IMR-90 (cell line): ENCODE measurements at regions of chr9 and their contacts with region 1.

Region 1: GRCh38 chr9:116937361-116937760 is 250.3 kb downstream of the TRIM32 start:
- DNase-seq: peak; percentile 71
- ATAC-seq: peak; percentile 53; the same call in 1 of the 2 replicates
- H3K4me3 ChIP-seq: no peak overlapping the region
- H3K27ac ChIP-seq: no peak overlapping the region
- H3K4me1 ChIP-seq: peaks cover 2% of the 10 kb centered on the region; the same call in 1 of the 2 replicates
- H3K27me3 ChIP-seq: peaks cover 1% of the 10 kb centered on the region; the same call in 1 of the 2 replicates
- CTCF ChIP-seq: no peak
- POLR2A ChIP-seq: no peak
- RAD21 ChIP-seq: no peak

Region 2: DNA sequence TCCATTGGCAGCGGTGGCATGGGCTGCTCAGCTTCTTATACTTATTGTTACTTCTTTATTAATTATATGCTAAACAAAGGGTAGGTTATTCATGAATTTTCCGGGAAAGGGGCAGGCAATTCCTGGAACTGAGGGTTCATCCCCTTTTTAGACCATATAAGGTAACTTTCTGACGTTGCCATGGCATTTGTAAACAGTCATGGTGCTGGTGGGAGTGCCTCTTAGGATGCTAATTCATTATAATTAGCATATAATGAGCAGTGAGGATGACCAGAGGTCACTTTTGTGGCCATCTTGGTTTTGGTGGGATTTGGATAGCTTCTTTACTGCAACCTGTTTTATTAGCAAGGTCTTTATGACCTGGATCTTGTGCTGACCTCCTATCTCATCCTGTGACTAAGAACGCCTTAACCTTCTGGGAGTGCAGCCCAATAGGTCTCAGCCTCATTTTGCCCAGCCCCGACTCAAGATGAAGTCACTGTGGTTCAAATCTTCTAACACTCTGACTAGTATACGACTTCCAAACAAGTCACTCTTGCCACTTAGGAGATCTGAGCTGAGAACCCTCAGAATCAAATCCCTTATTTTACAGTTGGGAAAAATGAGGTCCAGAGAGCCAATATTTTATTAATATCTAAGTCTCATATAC is 12.8 kb before region 1 on chr9:
- CTCF ChIA-PET with region 1: no interaction called
- POLR2A ChIA-PET with region 1: interaction called, 3 read pairs
- dilution Hi-C with region 1: no loop called
- in situ Hi-C with region 1: no loop called
- intact Hi-C with region 1: loop called (anchors 1 kb)
- DNase-seq: no peak
- ATAC-seq: no peak
- H3K4me3 ChIP-seq: no peak overlapping the region
- H3K27ac ChIP-seq: no peak overlapping the region
- H3K4me1 ChIP-seq: no peaks in the 10 kb centered on the region
- H3K27me3 ChIP-seq: peaks cover 2% of the 10 kb centered on the region; the same call in 1 of the 2 replicates
- CTCF ChIP-seq: no peak
- POLR2A ChIP-seq: no peak
- RAD21 ChIP-seq: no peak